ENCODE measurements at regions of chr12 and their contacts with region 1.

Region 1: GRCh38 chr12:49121047-49121696 is 10.0 kb downstream of the TUBA1B start:
- DNase-seq: peak; percentile 77 to 81
- H3K4me3 ChIP-seq: no peak overlapping the region
- H3K4me3 Mint-ChIP-seq: no peak overlapping the region
- H3K27ac Mint-ChIP-seq: no peak overlapping the region
- H3K4me1 ChIP-seq: no peaks in the 10 kb centered on the region
- H3K4me1 Mint-ChIP-seq: no peaks in the 10 kb centered on the region
- H3K27me3 ChIP-seq: no peaks in the 10 kb centered on the region
- H3K27me3 Mint-ChIP-seq: no peaks in the 10 kb centered on the region
- CTCF ChIP-seq: peak; percentile 77 to 78

Region 2: GRCh38 chr12:49088190-49088931 is 32.8 kb before region 1 on chr12:
- CTCF ChIA-PET with region 1: interaction called, 81 read pairs
- POLR2A ChIA-PET with region 1: interaction called, 6 read pairs
- intact Hi-C with region 1: loop called (anchors 1 kb)
- DNase-seq: peak; percentile 84
- H3K4me3 ChIP-seq: no peak overlapping the region
- H3K4me3 Mint-ChIP-seq: peak overlapping the region; percentile 50
- H3K27ac Mint-ChIP-seq: no peak overlapping the region
- H3K4me1 ChIP-seq: peaks cover 11% of the 10 kb centered on the region
- H3K4me1 Mint-ChIP-seq: no peaks in the 10 kb centered on the region
- H3K27me3 ChIP-seq: peaks cover 8% of the 10 kb centered on the region; the same call in 1 of the 2 replicates
- H3K27me3 Mint-ChIP-seq: peaks cover 19% of the 10 kb centered on the region
- CTCF ChIP-seq: peak; percentile 91 to 97

Region 3: GRCh38 chr12:49098035-49098451 is 23.1 kb before region 1 on chr12:
- CTCF ChIA-PET with region 1: interaction called, 14 read pairs
- POLR2A ChIA-PET with region 1: no interaction called
- intact Hi-C with region 1: no loop called
- DNase-seq: peak in 1 of 2 experiments; percentile 71
- H3K4me3 ChIP-seq: no peak overlapping the region
- H3K4me3 Mint-ChIP-seq: no peak overlapping the region
- H3K27ac Mint-ChIP-seq: no peak overlapping the region
- H3K4me1 ChIP-seq: no peaks in the 10 kb centered on the region; the same call in 1 of the 2 replicates
- H3K4me1 Mint-ChIP-seq: peaks cover 7% of the 10 kb centered on the region
- H3K27me3 ChIP-seq: peaks cover 8% of the 10 kb centered on the region; the same call in 1 of the 2 replicates
- H3K27me3 Mint-ChIP-seq: peaks cover 11% of the 10 kb centered on the region
- CTCF ChIP-seq: peak; percentile 78 to 90